B cell (primary cell): ENCODE measurements at regions of chr3 and their contacts with region 1.

Region 1: GRCh38 chr3:13091898-13092611 is 18.8 kb upstream of the IQSEC1 start:
- DNase-seq: peak; percentile 92
- ATAC-seq: peak; percentile 43
- H3K4me3 ChIP-seq: no peak overlapping the region
- H3K4me3 Mint-ChIP-seq: no peak overlapping the region
- H3K27ac ChIP-seq: no peak overlapping the region
- H3K27ac Mint-ChIP-seq: peak overlapping the region; percentile 59
- H3K4me1 ChIP-seq: peaks cover 47 to 67% of the 10 kb centered on the region in 2 donors
- H3K4me1 Mint-ChIP-seq: peaks cover 67% of the 10 kb centered on the region
- H3K27me3 ChIP-seq: peaks cover 0 to 14% (median 2%) of the 10 kb centered on the region in 4 experiments
- H3K27me3 Mint-ChIP-seq: peaks cover 16% of the 10 kb centered on the region
- CTCF ChIP-seq: peak; percentile 92

Region 2: DNA sequence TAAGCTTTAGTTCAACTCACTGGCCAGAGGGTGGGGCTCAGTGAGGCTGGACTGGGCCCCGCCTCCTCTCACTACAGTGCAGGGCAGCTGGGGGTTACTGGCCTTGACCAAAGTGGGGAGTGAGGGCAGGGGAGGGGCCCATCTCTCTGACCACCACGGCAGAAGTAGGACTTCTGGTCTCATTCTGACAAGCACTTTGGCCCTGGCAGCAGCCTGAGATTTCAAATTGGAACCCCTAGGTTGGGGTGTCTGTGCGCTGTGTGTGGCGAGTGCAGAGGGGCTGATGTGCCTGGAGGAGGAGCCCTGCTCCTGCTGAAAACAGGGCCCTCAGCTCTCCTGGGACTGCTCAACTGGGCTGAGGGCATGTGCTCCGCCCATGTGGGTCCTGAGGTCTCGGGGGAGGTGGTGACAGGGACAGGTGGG is 190.4 kb before region 1 on chr3:
- CTCF ChIA-PET with region 1: interaction called, 6 read pairs
- POLR2A ChIA-PET with region 1: no interaction called
- intact Hi-C with region 1: loop called (anchors 5 kb)
- DNase-seq: peak; percentile 45
- ATAC-seq: peak; percentile 86
- H3K4me3 ChIP-seq: no peak overlapping the region
- H3K4me3 Mint-ChIP-seq: peak overlapping the region; percentile 16
- H3K27ac ChIP-seq: peak overlapping the region in 1 of 2 donors; percentile 50
- H3K27ac Mint-ChIP-seq: peak overlapping the region; percentile 83
- H3K4me1 ChIP-seq: peaks cover 23 to 39% of the 10 kb centered on the region in 2 donors
- H3K4me1 Mint-ChIP-seq: peaks cover 30% of the 10 kb centered on the region
- H3K27me3 ChIP-seq: no peaks in the 10 kb centered on the region
- H3K27me3 Mint-ChIP-seq: no peaks in the 10 kb centered on the region
- CTCF ChIP-seq: no peak

Region 3: DNA sequence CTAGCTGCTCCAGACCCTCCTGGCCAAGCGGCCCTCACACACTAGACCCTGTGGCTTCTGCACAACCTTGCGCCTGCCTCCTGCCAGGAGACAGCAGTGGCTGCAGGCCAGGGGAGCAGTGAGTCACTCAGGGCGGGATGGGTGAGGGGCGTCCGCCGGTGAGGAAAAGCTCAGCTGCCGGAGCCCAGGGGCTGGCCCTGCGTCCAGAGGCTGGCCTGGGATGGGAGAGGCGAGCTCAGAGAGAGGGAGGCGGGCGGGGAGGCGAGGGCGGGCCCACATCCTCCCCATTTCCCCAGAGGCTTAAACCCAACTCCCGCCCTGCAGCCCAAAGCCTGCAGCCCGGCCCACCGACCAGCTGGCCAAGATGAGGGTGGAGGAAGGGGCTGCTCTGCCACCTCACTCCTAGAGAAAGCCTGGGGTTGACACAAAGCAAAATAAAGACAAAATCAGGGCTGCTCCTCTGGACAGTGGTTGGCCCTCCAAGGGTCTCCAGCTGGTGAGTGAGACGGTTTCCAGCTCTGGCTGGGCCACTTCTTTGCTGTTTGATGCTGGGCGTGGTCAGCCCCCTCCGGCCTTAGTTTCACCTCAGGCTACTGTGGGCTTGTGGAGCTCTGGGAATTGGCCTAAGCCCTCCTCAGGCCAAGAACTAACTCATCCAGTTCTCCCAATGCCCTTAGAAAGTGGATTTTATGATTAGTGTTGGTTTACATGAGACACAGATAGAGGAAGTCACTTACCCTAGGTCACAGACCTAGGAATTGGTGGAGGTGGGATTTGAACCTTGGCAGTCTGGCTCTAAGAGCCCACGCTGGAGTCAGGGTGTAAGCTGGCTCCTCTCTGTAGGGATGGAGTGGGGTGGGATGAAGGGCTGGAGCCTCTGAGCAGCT is 69.5 kb before region 1 on chr3:
- CTCF ChIA-PET with region 1: interaction called, 13 read pairs
- POLR2A ChIA-PET with region 1: interaction called, 6 read pairs
- intact Hi-C with region 1: loop called (anchors 1 kb)
- DNase-seq: peak; percentile 72
- ATAC-seq: peak; percentile 62
- H3K4me3 ChIP-seq: peak overlapping the region; percentile 81 to 98 (median 88)
- H3K4me3 Mint-ChIP-seq: peak overlapping the region; percentile 100
- H3K27ac ChIP-seq: peak overlapping the region; percentile 96 to 97
- H3K27ac Mint-ChIP-seq: peak overlapping the region; percentile 95
- H3K4me1 ChIP-seq: peaks cover 45 to 55% of the 10 kb centered on the region in 2 donors
- H3K4me1 Mint-ChIP-seq: peaks cover 78% of the 10 kb centered on the region
- H3K27me3 ChIP-seq: no peaks in the 10 kb centered on the region
- H3K27me3 Mint-ChIP-seq: no peaks in the 10 kb centered on the region
- CTCF ChIP-seq: no peak

Region 4: GRCh38 chr3:13054341-13055285 is 37.4 kb before region 1 on chr3:
- CTCF ChIA-PET with region 1: no interaction called
- POLR2A ChIA-PET with region 1: no interaction called
- intact Hi-C with region 1: no loop called
- DNase-seq: no peak
- ATAC-seq: no peak
- H3K4me3 ChIP-seq: no peak overlapping the region
- H3K4me3 Mint-ChIP-seq: no peak overlapping the region
- H3K27ac ChIP-seq: no peak overlapping the region
- H3K27ac Mint-ChIP-seq: no peak overlapping the region
- H3K4me1 ChIP-seq: peaks cover 12 to 35% of the 10 kb centered on the region in 2 donors
- H3K4me1 Mint-ChIP-seq: peaks cover 38% of the 10 kb centered on the region
- H3K27me3 ChIP-seq: no peaks in the 10 kb centered on the region
- H3K27me3 Mint-ChIP-seq: no peaks in the 10 kb centered on the region
- CTCF ChIP-seq: no peak

Region 5: DNA sequence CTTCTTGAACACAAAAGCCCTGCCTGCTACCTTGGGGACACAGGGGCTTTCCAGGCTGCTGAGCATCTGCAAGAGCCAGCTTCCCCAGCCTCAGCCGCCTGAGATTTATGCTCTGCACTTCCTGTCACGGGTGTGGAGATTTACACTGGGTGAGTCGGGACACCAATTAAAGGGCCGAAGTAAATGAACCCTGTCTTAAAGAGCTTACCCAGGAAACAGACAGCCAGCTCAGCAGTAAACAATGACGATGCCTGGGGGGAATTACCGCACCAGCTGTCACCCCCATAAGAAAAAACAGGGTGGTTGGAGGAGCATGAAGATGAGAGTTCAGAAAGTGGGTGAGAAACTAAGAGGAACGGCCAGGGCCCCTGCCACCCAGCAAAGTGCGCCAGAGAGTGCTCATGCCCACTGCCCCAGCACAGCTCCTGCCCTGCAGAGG is 18.6 kb after region 1 on chr3:
- CTCF ChIA-PET with region 1: interaction called, 76 read pairs
- POLR2A ChIA-PET with region 1: interaction called, 9 read pairs
- intact Hi-C with region 1: loop called (anchors 1 kb)
- DNase-seq: peak; percentile 98
- ATAC-seq: peak; percentile 86
- H3K4me3 ChIP-seq: peak overlapping the region in 4 of 5 experiments; percentile 13 to 24 (median 16)
- H3K4me3 Mint-ChIP-seq: peak overlapping the region; percentile 64
- H3K27ac ChIP-seq: peak overlapping the region; percentile 98 to 99
- H3K27ac Mint-ChIP-seq: peak overlapping the region; percentile 96
- H3K4me1 ChIP-seq: peaks cover 59 to 62% of the 10 kb centered on the region in 2 donors
- H3K4me1 Mint-ChIP-seq: peaks cover 58% of the 10 kb centered on the region
- H3K27me3 ChIP-seq: peaks cover 0 to under 1% (median 0%) of the 10 kb centered on the region in 4 experiments
- H3K27me3 Mint-ChIP-seq: no peaks in the 10 kb centered on the region
- CTCF ChIP-seq: no peak

Region 6: GRCh38 chr3:13282986-13283876 is 191.2 kb after region 1 on chr3:
- CTCF ChIA-PET with region 1: interaction called, 53 read pairs
- POLR2A ChIA-PET with region 1: no interaction called
- intact Hi-C with region 1: loop called (anchors 2 kb)
- DNase-seq: peak; percentile 62
- ATAC-seq: peak; percentile 74
- H3K4me3 ChIP-seq: peak overlapping the region in 4 of 5 experiments; percentile 3 to 47 (median 36)
- H3K4me3 Mint-ChIP-seq: peak overlapping the region; percentile 86
- H3K27ac ChIP-seq: no peak overlapping the region
- H3K27ac Mint-ChIP-seq: no peak overlapping the region
- H3K4me1 ChIP-seq: peaks cover 21% of the 10 kb centered on the region in 2 donors
- H3K4me1 Mint-ChIP-seq: peaks cover 13% of the 10 kb centered on the region
- H3K27me3 ChIP-seq: peaks cover 2 to 58% (median 37%) of the 10 kb centered on the region in 4 experiments
- H3K27me3 Mint-ChIP-seq: peaks cover 46% of the 10 kb centered on the region
- CTCF ChIP-seq: peak; percentile 49

Region 7: GRCh38 chr3:13346481-13347389 is 254.7 kb after region 1 on chr3:
- CTCF ChIA-PET with region 1: interaction called, 20 read pairs
- POLR2A ChIA-PET with region 1: no interaction called
- intact Hi-C with region 1: no loop called
- DNase-seq: peak; percentile 42
- ATAC-seq: peak; percentile 47
- H3K4me3 ChIP-seq: no peak overlapping the region
- H3K4me3 Mint-ChIP-seq: no peak overlapping the region
- H3K27ac ChIP-seq: no peak overlapping the region
- H3K27ac Mint-ChIP-seq: peak overlapping the region; percentile 67
- H3K4me1 ChIP-seq: peaks cover 6 to 15% of the 10 kb centered on the region in 2 donors
- H3K4me1 Mint-ChIP-seq: peaks cover 23% of the 10 kb centered on the region
- H3K27me3 ChIP-seq: no peaks in the 10 kb centered on the region
- H3K27me3 Mint-ChIP-seq: no peaks in the 10 kb centered on the region
- CTCF ChIP-seq: no peak

Region 8: GRCh38 chr3:13461169-13462158 is 369.4 kb after region 1 on chr3:
- CTCF ChIA-PET with region 1: interaction called, 17 read pairs
- POLR2A ChIA-PET with region 1: interaction called, 3 read pairs
- intact Hi-C with region 1: no loop called
- DNase-seq: peak; percentile 78
- ATAC-seq: peak; percentile 85
- H3K4me3 ChIP-seq: no peak overlapping the region
- H3K4me3 Mint-ChIP-seq: no peak overlapping the region
- H3K27ac ChIP-seq: no peak overlapping the region
- H3K27ac Mint-ChIP-seq: peak overlapping the region; percentile 20
- H3K4me1 ChIP-seq: no peaks in the 10 kb centered on the region
- H3K4me1 Mint-ChIP-seq: peaks cover 3% of the 10 kb centered on the region
- H3K27me3 ChIP-seq: peaks cover 0 to 9% (median 2%) of the 10 kb centered on the region in 4 experiments
- H3K27me3 Mint-ChIP-seq: peaks cover 20% of the 10 kb centered on the region
- CTCF ChIP-seq: peak; percentile 81

Region 9: GRCh38 chr3:13612829-13613228 is 520.8 kb after region 1 on chr3:
- CTCF ChIA-PET with region 1: no interaction called
- POLR2A ChIA-PET with region 1: no interaction called
- intact Hi-C with region 1: no loop called
- DNase-seq: no peak
- ATAC-seq: no peak
- H3K4me3 ChIP-seq: no peak overlapping the region
- H3K4me3 Mint-ChIP-seq: no peak overlapping the region
- H3K27ac ChIP-seq: no peak overlapping the region
- H3K27ac Mint-ChIP-seq: no peak overlapping the region
- H3K4me1 ChIP-seq: no peaks in the 10 kb centered on the region
- H3K4me1 Mint-ChIP-seq: no peaks in the 10 kb centered on the region
- H3K27me3 ChIP-seq: no peaks in the 10 kb centered on the region
- H3K27me3 Mint-ChIP-seq: peaks cover 14% of the 10 kb centered on the region
- CTCF ChIP-seq: no peak